Activated naive CD4-positive, alpha-beta T cell treated with anti-CD3 and anti-CD28 coated beads for 36 hours (primary cell): ENCODE measurements at regions of chr1 and their contacts with region 1.

Region 1: GRCh38 chr1:19462781-19463503 is 22.4 kb downstream of the CAPZB start:
- DNase-seq: peak; percentile 59
- H3K4me3 Mint-ChIP-seq: no peak overlapping the region
- H3K27ac Mint-ChIP-seq: peak overlapping the region; percentile 66
- H3K4me1 Mint-ChIP-seq: peaks cover 88% of the 10 kb centered on the region
- H3K27me3 Mint-ChIP-seq: no peaks in the 10 kb centered on the region

Region 2: DNA sequence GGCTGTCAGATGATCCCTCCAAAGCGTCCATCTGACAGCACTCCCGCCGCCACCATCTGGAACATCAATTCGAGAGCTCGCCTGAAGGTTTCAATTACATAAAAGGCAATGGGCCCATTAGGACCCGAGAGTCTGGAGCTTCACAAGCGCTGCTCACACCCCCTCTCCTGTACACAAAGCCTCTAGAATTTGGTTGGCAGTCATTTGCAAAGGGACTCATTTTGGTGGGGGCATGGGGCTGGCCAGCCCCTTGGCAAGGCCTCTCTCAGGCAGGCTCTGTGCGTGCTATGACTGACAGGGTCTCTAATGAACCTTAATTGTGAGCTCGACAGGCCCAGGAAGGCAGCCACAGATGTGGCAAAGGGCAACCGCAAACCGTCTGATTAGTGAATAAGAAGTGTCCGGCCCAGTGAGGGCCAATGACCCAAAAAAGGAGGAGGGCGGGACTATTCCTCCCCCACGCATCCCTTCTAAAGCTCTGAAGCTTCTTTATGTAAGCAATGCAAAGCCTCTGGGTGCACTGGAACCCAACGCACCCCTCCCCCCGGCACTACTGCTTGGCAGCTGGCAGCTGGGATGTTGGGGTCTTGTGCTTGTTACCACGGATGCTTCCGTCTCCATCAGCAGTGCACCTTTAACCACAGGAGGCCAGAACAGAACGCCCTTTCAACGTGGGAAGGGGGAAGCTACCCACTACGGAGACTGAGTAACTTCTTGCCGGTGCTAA is 57.0 kb before region 1 on chr1:
- CTCF ChIA-PET with region 1: no interaction called
- intact Hi-C with region 1: no loop called
- DNase-seq: no peak
- H3K4me3 Mint-ChIP-seq: no peak overlapping the region
- H3K27ac Mint-ChIP-seq: no peak overlapping the region
- H3K4me1 Mint-ChIP-seq: peaks cover 75% of the 10 kb centered on the region
- H3K27me3 Mint-ChIP-seq: no peaks in the 10 kb centered on the region

Region 3: DNA sequence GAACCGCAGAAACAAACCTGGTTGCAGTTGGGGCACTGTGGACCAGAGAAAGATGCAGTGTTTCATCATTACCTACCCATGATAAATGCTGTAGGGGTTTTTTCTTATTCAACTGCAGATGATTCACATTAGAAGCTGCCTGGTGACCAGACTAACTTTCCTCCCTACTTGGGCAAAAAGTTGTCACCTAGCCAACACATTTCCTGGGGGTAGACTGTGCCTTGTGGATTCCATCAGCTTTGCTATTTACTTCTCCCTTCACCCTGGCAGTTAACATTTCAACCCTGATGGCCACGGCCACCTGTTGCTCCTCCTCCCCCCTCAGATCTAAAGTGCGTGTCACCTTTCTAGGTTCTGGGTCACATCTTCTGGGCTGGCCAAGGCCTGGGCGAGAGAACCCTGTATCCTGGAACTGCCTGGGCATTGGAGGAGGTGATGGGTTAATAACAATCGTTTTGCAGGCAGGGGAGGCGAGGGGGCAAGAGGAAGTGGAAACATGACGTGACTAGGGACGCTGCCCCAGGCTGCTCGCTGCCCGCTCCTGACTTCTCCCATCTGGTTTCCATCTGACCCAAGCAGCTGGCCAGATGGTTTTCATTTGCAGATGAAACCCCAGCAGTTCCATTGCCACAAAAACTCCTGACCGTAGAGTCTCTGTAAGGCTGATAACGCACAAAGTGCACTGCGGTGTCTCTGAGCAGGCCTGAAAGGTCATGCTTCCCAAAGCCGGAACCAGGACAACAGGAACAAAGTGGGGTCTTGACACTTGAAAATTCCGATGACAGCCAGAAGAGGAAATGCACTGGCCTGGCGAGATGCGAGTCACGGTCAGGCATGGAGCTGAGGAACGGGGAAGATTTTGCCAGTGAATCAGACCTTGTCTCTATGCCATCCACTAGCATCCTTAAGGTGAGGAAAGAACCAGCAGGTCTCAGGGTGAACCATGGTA is 14.2 kb before region 1 on chr1:
- CTCF ChIA-PET with region 1: no interaction called
- intact Hi-C with region 1: loop called (anchors 1 kb)
- DNase-seq: peak; percentile 74
- H3K4me3 Mint-ChIP-seq: peak overlapping the region; percentile 17
- H3K27ac Mint-ChIP-seq: peak overlapping the region; percentile 90
- H3K4me1 Mint-ChIP-seq: peaks cover 91% of the 10 kb centered on the region
- H3K27me3 Mint-ChIP-seq: no peaks in the 10 kb centered on the region

Region 4: DNA sequence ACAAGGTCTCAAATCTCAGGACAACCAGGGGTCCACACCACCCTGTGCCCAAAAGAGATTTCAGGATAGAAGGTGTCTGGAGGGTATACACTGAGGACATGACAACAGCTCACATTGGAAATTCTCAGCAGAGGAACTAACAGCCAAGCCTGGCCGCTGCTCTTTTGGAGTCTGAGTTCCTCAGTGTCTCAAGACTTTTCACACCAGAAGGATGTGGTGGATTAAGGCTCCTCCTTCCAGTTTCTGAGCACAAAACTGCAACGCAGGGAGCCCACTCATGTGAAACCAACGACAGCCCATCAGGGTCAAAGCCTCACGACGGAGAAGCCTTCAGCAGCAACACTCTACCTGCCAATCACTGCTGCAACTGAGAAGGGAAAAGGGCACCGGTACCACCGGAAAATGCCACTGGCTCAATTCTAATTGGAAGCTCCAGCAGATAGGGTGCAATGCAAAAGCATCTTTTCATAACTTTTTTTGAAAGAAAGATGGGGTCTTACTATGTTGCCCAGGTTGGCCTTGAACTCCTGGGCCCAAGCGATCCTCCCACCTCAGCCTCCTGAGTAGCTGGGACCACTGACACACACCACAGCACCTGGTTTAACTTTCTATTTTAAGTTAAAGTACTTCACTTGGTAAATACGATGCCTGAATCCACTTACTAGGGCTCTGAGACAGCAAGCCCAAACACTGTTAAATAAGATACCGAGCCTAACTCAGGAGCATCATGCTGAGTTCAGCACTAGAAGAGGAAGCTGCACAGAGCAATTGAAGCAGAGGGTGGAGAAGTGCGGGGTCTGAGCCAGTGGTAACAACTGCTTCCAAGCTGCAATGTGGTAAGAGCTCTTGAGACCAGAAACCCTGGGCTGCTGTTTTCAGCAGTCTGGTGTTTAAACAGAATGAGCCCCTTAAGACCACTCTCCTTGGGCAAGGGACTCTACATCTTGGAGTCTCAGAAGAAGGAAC is 14.6 kb after region 1 on chr1:
- CTCF ChIA-PET with region 1: interaction called, 10 read pairs
- intact Hi-C with region 1: loop called (anchors 1 kb)
- DNase-seq: peak; percentile 61
- H3K4me3 Mint-ChIP-seq: peak overlapping the region; percentile 58
- H3K27ac Mint-ChIP-seq: peak overlapping the region; percentile 92
- H3K4me1 Mint-ChIP-seq: peaks cover 93% of the 10 kb centered on the region
- H3K27me3 Mint-ChIP-seq: no peaks in the 10 kb centered on the region

Region 5: DNA sequence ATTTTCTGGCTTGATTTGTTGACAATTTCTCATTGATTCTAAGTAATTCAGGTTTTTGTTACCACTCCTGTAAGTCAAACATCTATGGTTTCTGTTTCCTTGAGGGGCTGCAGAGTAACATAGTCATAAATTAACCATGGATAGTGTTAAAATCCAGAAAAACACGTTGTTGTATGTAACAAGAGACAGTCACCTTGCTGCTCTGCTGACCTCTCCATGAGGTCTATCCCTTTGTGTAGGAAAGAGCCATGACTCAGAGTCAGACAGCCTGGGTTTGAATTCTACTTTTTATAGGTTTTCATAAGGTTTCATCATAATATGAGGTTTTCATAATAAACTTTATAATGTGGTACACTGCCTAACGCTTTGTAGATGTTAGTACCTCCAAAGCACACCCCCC is 153.5 kb after region 1 on chr1:
- CTCF ChIA-PET with region 1: no interaction called
- intact Hi-C with region 1: no loop called
- DNase-seq: no peak
- H3K4me3 Mint-ChIP-seq: no peak overlapping the region
- H3K27ac Mint-ChIP-seq: no peak overlapping the region
- H3K4me1 Mint-ChIP-seq: peaks cover 29% of the 10 kb centered on the region
- H3K27me3 Mint-ChIP-seq: no peaks in the 10 kb centered on the region

Region 6: DNA sequence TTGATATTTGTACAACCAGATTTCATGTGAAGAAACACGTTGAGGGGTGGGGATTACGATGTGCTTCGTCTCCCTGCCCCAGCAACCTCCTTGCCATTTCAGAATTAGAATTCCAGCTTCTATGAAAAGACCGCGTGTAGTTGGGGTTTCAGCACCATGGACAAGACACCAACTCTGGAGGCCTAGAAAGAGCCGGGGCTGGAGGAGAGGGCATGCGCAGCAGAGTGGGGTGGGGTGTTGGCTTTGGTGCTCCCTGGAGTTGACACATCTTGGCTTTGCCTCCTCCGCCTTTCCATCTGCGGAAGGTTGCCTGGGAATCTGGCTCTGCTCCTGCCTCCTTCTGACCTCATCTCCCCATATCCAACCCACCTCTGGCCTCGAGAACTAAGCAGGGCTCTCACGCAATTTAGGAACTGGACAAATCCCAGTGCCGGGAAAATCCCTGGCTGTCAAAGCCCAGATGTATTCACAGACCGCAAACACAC is 213.5 kb after region 1 on chr1:
- CTCF ChIA-PET with region 1: no interaction called
- intact Hi-C with region 1: no loop called
- DNase-seq: peak; percentile 51
- H3K4me3 Mint-ChIP-seq: no peak overlapping the region
- H3K27ac Mint-ChIP-seq: no peak overlapping the region
- H3K4me1 Mint-ChIP-seq: no peaks in the 10 kb centered on the region
- H3K27me3 Mint-ChIP-seq: peaks cover 6% of the 10 kb centered on the region